Activated CD4-positive, alpha-beta T cell treated with anti-CD3 and anti-CD28 coated beads, Interleukin-2, amount 10 ng/mL, durations not matched to agents 24 days and 14 days (primary cell): ENCODE measurements at regions of chr16 and their contacts with region 1.

Region 1: GRCh38 chr16:79071424-79071823 is 529.1 kb downstream of the MAF start:
- DNase-seq: no peak
- H3K4me3 Mint-ChIP-seq: no peak overlapping the region
- H3K27ac Mint-ChIP-seq: no peak overlapping the region
- H3K4me1 Mint-ChIP-seq: peaks cover 56% of the 10 kb centered on the region
- H3K27me3 Mint-ChIP-seq: no peaks in the 10 kb centered on the region

Region 2: DNA sequence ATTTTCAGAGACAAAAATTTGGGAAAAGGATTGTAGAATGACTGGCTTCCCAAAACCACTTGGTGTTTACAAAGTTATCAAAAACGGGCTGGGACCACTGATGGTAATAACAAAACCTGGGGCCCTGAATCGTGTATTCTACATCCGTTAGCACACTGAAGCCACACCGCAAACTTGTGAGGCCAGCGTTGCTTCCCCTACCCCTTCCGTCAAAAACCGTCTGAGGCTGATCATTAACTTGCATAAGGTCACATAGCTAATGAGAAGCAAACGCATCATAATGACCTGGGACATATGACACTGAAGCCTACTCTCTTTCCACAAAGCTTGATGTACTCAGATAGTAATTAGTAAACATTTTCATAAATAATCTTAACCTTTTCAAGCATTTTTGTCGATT is 175.1 kb before region 1 on chr16:
- intact Hi-C with region 1: loop called (anchors 1 kb)
- DNase-seq: no peak
- H3K4me3 Mint-ChIP-seq: no peak overlapping the region
- H3K27ac Mint-ChIP-seq: peak overlapping the region; percentile 56
- H3K4me1 Mint-ChIP-seq: peaks cover 33% of the 10 kb centered on the region
- H3K27me3 Mint-ChIP-seq: peaks cover 2% of the 10 kb centered on the region

Region 3: DNA sequence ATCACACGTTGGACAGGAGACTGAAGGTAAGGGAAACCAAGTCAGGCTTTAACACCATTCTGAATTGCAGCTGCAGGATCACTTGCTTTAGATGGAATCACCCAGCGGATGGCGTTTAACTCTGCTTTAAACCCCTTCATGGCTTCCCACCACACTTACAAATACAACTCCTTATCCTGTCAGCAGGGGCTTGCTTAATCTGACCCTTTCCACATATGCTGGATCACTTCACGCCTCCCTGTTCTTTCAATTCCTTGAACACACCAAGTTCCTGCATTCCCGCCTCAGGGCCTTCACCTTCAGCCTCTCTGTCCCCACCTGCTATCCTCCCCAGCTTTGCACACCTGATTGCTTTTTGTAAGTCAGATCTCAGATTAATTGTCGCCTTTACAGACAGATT is 86.9 kb after region 1 on chr16:
- intact Hi-C with region 1: loop called (anchors 5 kb)
- DNase-seq: no peak
- H3K4me3 Mint-ChIP-seq: no peak overlapping the region
- H3K27ac Mint-ChIP-seq: no peak overlapping the region
- H3K4me1 Mint-ChIP-seq: peaks cover 30% of the 10 kb centered on the region
- H3K27me3 Mint-ChIP-seq: no peaks in the 10 kb centered on the region

Region 4: GRCh38 chr16:79186196-79186595 is 114.8 kb after region 1 on chr16:
- intact Hi-C with region 1: no loop called
- DNase-seq: no peak
- H3K4me3 Mint-ChIP-seq: no peak overlapping the region
- H3K27ac Mint-ChIP-seq: no peak overlapping the region
- H3K4me1 Mint-ChIP-seq: peaks cover 22% of the 10 kb centered on the region
- H3K27me3 Mint-ChIP-seq: no peaks in the 10 kb centered on the region

Region 5: DNA sequence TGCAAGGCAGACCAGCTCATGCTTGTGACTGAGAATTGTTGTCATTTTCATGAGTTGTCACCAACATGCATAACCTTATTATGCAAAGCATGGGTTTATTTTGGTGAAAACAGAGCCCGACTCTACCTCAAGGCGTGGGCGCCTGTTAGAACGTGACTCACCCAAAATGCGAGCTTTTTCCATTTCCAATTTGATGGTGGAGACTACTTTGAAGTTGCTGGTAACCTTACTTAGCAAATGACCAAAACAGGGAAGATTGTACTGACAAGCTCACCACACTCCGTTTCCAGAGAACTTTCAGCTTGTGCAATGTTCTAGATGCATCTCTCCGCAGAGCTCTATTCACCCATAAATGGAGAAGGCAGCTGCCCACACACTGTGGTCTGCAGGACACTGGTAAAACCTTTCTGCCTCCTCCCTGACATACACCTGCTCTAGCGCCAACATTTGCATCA is 244.6 kb after region 1 on chr16:
- intact Hi-C with region 1: loop called (anchors 1 kb)
- DNase-seq: peak; percentile 84
- H3K4me3 Mint-ChIP-seq: peak overlapping the region; percentile 68
- H3K27ac Mint-ChIP-seq: peak overlapping the region; percentile 87
- H3K4me1 Mint-ChIP-seq: peaks cover 31% of the 10 kb centered on the region
- H3K27me3 Mint-ChIP-seq: peaks cover 25% of the 10 kb centered on the region

Region 6: DNA sequence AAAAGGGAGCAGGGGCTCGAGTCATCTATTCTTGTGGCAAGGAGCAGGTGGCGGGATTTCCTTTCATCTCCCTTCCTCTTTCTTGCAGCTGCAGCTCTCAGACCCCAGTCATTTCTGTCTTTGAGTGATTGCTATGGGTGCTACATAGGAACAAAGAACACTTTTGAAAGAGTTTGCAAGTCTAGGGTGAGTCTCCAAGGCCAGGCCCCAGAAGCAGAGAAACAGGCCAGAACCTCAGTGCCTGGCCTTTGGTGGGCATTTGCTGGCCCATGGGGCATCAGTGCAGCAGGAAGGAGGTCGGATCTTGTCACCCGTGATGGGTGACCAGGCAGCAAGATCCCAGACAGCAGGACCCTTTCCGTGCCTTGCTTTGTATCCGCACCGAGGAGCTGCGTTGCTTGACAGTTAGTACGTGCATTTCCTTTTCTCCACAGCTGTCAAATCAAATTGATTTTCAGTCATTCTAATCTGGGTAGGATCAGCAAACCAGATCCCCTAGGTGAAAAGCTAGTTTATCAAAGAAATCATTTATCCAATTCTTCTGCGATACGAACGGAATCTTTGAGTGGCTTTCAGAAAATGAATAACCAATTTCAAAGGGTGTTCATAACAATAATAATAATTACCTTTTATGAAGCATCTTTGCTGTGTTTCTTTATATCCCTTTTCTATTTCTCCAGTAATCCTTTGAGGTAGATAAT is 773.8 kb after region 1 on chr16:
- intact Hi-C with region 1: loop called (anchors 10 kb)
- DNase-seq: peak; percentile 61
- H3K4me3 Mint-ChIP-seq: peak overlapping the region; percentile 42
- H3K27ac Mint-ChIP-seq: peak overlapping the region; percentile 64
- H3K4me1 Mint-ChIP-seq: peaks cover 37% of the 10 kb centered on the region
- H3K27me3 Mint-ChIP-seq: no peaks in the 10 kb centered on the region